Psoas muscle (tissue), 8 donors: ENCODE measurements at regions of chr6 and their contacts with region 1.

Region 1: GRCh38 chr6:110720066-110720465 is 95.2 kb downstream of the CDK19 start:
- DNase-seq: no peak
- ATAC-seq: no peak
- H3K4me3 ChIP-seq: no peak overlapping the region
- H3K27ac ChIP-seq: no peak overlapping the region
- H3K4me1 ChIP-seq: no peaks in the 10 kb centered on the region
- H3K27me3 ChIP-seq: no peaks in the 10 kb centered on the region
- CTCF ChIP-seq: no peak

Region 2: GRCh38 chr6:110703010-110703905 is 16.8 kb before region 1 on chr6:
- intact Hi-C with region 1: loop called in 1 of 2 experiments (anchors 1 kb)
- DNase-seq: no peak
- ATAC-seq: no peak
- H3K4me3 ChIP-seq: no peak overlapping the region
- H3K27ac ChIP-seq: no peak overlapping the region
- H3K4me1 ChIP-seq: no peaks in the 10 kb centered on the region
- H3K27me3 ChIP-seq: no peaks in the 10 kb centered on the region
- CTCF ChIP-seq: no peak